Right lobe of liver (tissue), 6 donors: ENCODE measurements at regions of chr12 and their contacts with region 1.

Region 1: GRCh38 chr12:79555028-79555930 is 135.5 kb downstream of the PAWR start:
- DNase-seq: no peak
- ATAC-seq: peak; percentile 56 to 70 (median 59)
- H3K4me3 ChIP-seq: no peak overlapping the region
- H3K27ac ChIP-seq: peak overlapping the region; percentile 21 to 41 (median 41)
- H3K4me1 ChIP-seq: peaks cover 0 to 30% (median 12%) of the 10 kb centered on the region in 4 donors
- H3K27me3 ChIP-seq: no peaks in the 10 kb centered on the region
- CTCF ChIP-seq: peak; percentile 55 to 74 (median 62)
- POLR2A ChIP-seq: no peak

Region 2: DNA sequence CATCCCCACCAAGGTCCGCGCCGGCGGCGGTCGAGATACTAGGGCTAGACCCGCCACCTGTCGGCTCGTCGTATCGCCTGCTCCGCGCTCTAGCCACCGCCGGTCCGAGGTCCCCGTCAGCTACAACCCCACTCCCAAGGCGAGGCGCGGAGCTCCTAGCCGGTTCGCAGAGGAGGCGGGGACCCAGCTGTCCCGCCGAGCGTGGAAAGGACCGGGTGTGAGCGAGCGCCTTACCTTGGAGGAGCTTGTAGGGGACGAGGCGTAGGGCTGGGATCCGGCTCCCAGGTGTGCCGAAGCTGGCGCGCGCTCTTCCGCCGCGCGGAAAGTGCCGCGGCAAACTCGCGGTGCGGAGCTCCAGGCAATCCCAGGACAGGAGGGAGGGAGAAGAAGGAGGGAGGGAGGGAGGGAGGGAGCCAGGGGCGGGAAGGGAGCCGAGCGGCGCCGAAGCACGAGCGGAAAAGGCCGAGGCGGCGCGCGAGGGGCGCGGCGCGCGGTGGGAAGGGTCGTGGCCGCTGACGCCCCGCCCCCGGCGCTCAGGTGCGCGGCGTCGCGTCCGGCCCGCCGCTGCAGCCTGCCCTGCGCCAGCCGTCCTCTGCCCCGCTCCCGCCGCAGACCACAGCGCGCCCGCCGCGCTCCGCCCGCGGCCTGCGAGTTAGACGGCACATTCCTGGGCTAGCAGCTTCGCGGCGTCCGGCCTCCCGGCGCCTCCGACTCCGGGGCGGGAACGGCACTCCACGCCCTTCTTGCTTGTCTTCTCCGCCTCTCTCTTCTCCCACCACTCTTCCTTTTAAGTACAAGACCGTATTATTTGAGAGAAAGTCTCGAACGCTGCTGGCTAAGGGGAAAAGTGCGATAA is 135.6 kb after region 1 on chr12 and contains the start of gene PAWR:
- intact Hi-C with region 1: loop called in 1 of 2 experiments (anchors 5 kb)
- DNase-seq: peak; percentile 87 to 90 (median 88)
- ATAC-seq: peak; percentile 71 to 90 (median 84)
- H3K4me3 ChIP-seq: peak within 1 kb of the TSS; percentile 78 to 91 (median 81)
- H3K27ac ChIP-seq: peak within 1 kb of the TSS; percentile 87 to 91 (median 89)
- H3K4me1 ChIP-seq: peaks cover 0 to 9% (median 5%) of the 10 kb centered on the region in 4 donors
- H3K27me3 ChIP-seq: no peaks in the 10 kb centered on the region
- CTCF ChIP-seq: peak in 3 of 4 donors; percentile 31 to 43 (median 35)
- POLR2A ChIP-seq: peak; percentile 93
- total RNA-seq, gene PAWR: 25.0 to 62.3 (median 28.9) TPM

Region 3: DNA sequence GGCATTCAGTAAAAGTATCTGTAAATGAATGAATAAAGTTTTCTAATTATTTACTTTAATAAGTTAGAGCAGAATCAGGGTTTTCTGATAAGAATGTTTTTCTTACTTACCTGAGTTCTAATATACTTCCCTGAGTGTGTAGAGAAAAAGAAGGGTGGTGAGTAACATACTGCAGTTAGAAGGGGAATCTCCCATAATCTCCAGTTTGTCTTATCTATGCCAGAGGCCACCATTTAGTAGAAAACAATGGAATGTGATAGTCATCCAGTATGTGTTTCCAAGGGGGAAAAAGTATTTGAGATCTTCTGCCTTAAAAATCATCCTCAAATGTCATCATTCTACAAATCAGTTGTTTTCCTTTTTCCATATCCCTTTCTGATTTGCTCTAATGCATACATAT is 192.0 kb after region 1 on chr12:
- intact Hi-C with region 1: loop called in 1 of 2 experiments (anchors 10 kb)
- DNase-seq: no peak
- ATAC-seq: no peak
- H3K4me3 ChIP-seq: no peak overlapping the region
- H3K27ac ChIP-seq: no peak overlapping the region
- H3K4me1 ChIP-seq: no peaks in the 10 kb centered on the region
- H3K27me3 ChIP-seq: no peaks in the 10 kb centered on the region
- CTCF ChIP-seq: no peak
- POLR2A ChIP-seq: no peak

Region 4: DNA sequence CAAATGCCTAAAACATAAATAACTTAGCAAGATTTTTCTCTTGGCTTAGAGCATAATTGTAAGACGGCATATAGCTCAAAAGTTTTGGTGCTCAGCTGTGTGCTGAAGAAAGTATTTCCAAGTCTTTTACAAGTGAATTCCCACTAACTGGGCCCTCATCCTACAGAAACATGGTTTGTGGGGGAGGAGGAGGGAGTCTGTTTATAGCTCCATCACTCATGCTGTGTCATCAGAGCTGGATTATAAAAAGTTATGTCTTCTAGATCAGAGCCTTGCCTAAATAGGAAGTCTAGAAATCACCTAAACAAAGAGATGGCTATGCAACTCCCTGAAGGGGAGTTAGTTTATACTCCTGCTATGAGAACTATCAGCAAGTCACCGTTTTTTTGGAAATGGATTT is 478.2 kb after region 1 on chr12:
- intact Hi-C with region 1: no loop called
- DNase-seq: no peak
- ATAC-seq: no peak
- H3K4me3 ChIP-seq: no peak overlapping the region
- H3K27ac ChIP-seq: no peak overlapping the region
- H3K4me1 ChIP-seq: no peaks in the 10 kb centered on the region
- H3K27me3 ChIP-seq: no peaks in the 10 kb centered on the region
- CTCF ChIP-seq: no peak
- POLR2A ChIP-seq: no peak